ENCODE measurements at regions of chr3 and their contacts with region 1.

Region 1: GRCh38 chr3:169149349-169149890 is 514.1 kb downstream of the MECOM start:
- DNase-seq: peak; percentile 88
- ATAC-seq: peak; percentile 93
- H3K4me3 Mint-ChIP-seq: peak overlapping the region; percentile 44
- H3K27ac Mint-ChIP-seq: no peak overlapping the region
- H3K4me1 Mint-ChIP-seq: peaks cover 20% of the 10 kb centered on the region
- H3K27me3 Mint-ChIP-seq: peaks cover 63% of the 10 kb centered on the region

Region 2: GRCh38 chr3:169165196-169166158 is 16.1 kb after region 1 on chr3:
- CTCF ChIA-PET with region 1: interaction called, 10 read pairs
- POLR2A ChIA-PET with region 1: no interaction called
- intact Hi-C with region 1: no loop called
- DNase-seq: no peak
- ATAC-seq: no peak
- H3K4me3 Mint-ChIP-seq: no peak overlapping the region
- H3K27ac Mint-ChIP-seq: no peak overlapping the region
- H3K4me1 Mint-ChIP-seq: no peaks in the 10 kb centered on the region
- H3K27me3 Mint-ChIP-seq: peaks cover 6% of the 10 kb centered on the region

Region 3: GRCh38 chr3:169661361-169662131 is 512.1 kb after region 1 on chr3:
- CTCF ChIA-PET with region 1: interaction called, 6 read pairs
- POLR2A ChIA-PET with region 1: no interaction called
- intact Hi-C with region 1: loop called in 1 of 2 experiments (anchors 2 kb)
- DNase-seq: peak; percentile 46
- ATAC-seq: peak; percentile 35
- H3K4me3 Mint-ChIP-seq: peak overlapping the region; percentile 65
- H3K27ac Mint-ChIP-seq: peak overlapping the region; percentile 21
- H3K4me1 Mint-ChIP-seq: peaks cover 40% of the 10 kb centered on the region
- H3K27me3 Mint-ChIP-seq: peaks cover 76% of the 10 kb centered on the region

Region 4: GRCh38 chr3:169744366-169745054 is 595.1 kb after region 1 on chr3:
- CTCF ChIA-PET with region 1: interaction called, 4 read pairs
- POLR2A ChIA-PET with region 1: no interaction called
- intact Hi-C with region 1: loop called (anchors 1 to 5 kb)
- DNase-seq: no peak
- ATAC-seq: no peak
- H3K4me3 Mint-ChIP-seq: no peak overlapping the region
- H3K27ac Mint-ChIP-seq: no peak overlapping the region
- H3K4me1 Mint-ChIP-seq: peaks cover 16% of the 10 kb centered on the region
- H3K27me3 Mint-ChIP-seq: peaks cover 16% of the 10 kb centered on the region